PC-9 (cell line): ENCODE measurements at regions of chr7 and their contacts with region 1.

Region 1: GRCh38 chr7:54898659-54899340 is 120.0 kb upstream of the EGFR start:
- DNase-seq: no peak
- H3K4me3 ChIP-seq: no peak overlapping the region
- H3K27ac ChIP-seq: no peak overlapping the region
- H3K4me1 ChIP-seq: no peaks in the 10 kb centered on the region
- H3K27me3 ChIP-seq: no peaks in the 10 kb centered on the region
- CTCF ChIP-seq: no peak

Region 2: GRCh38 chr7:53835301-53835700 is 1063.5 kb before region 1 on chr7:
- CTCF ChIA-PET with region 1: no interaction called
- POLR2A ChIA-PET with region 1: interaction called, 11 read pairs
- intact Hi-C with region 1: no loop called
- DNase-seq: no peak
- H3K4me3 ChIP-seq: no peak overlapping the region
- H3K27ac ChIP-seq: no peak overlapping the region
- H3K4me1 ChIP-seq: no peaks in the 10 kb centered on the region
- H3K27me3 ChIP-seq: no peaks in the 10 kb centered on the region
- CTCF ChIP-seq: no peak

Region 3: GRCh38 chr7:54921116-54921515 is 22.3 kb after region 1 on chr7:
- CTCF ChIA-PET with region 1: no interaction called
- POLR2A ChIA-PET with region 1: no interaction called
- intact Hi-C with region 1: no loop called
- DNase-seq: no peak
- H3K4me3 ChIP-seq: no peak overlapping the region
- H3K27ac ChIP-seq: no peak overlapping the region
- H3K4me1 ChIP-seq: peaks cover 10% of the 10 kb centered on the region
- H3K27me3 ChIP-seq: no peaks in the 10 kb centered on the region
- CTCF ChIP-seq: no peak

Region 4: DNA sequence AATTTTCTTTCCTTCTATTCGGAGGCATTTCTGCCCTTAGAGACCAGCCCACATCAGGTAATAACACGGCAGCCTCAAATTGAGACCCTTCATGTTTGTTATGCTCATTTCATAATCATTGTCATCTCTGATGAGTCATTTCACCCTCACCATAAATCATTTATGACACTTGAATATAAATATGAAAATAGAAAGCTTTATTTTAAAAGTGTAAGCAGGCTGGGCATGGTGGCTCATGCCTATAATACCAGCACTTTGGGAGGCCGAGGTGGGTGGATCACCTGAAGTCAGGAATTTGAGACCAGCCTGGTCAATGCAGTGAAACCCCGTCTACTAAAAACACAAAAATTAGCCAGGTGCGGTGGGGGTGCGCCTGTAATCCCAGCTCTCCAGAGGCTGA is 62.6 kb after region 1 on chr7:
- CTCF ChIA-PET with region 1: interaction called, 3 read pairs
- POLR2A ChIA-PET with region 1: interaction called, 11 read pairs
- intact Hi-C with region 1: no loop called
- DNase-seq: peak; percentile 88 to 98
- H3K4me3 ChIP-seq: peak overlapping the region; percentile 12; the same call in 1 of the 2 replicates
- H3K27ac ChIP-seq: peak overlapping the region; percentile 71
- H3K4me1 ChIP-seq: peaks cover 34% of the 10 kb centered on the region
- H3K27me3 ChIP-seq: no peaks in the 10 kb centered on the region
- CTCF ChIP-seq: no peak